ENCODE measurements at regions of chr5 and their contacts with region 1.

Region 1: GRCh38 chr5:10441083-10441991 is at the start of gene ROPN1L:
- DNase-seq: peak; percentile 96
- H3K4me3 Mint-ChIP-seq: peak within 1 kb of the TSS; percentile 88
- H3K27ac Mint-ChIP-seq: no peak within 1 kb of the TSS
- H3K4me1 Mint-ChIP-seq: peaks cover 31% of the 10 kb centered on the region
- H3K27me3 Mint-ChIP-seq: peaks cover 7% of the 10 kb centered on the region
- total RNA-seq, gene ROPN1L: not detected in 2 replicates

Region 2: GRCh38 chr5:10577371-10578292 is 136.3 kb after region 1 on chr5:
- intact Hi-C with region 1: loop called (anchors 5 kb)
- DNase-seq: no peak
- H3K4me3 Mint-ChIP-seq: peak overlapping the region; percentile 3
- H3K27ac Mint-ChIP-seq: peak overlapping the region; percentile 7
- H3K4me1 Mint-ChIP-seq: peaks cover 42% of the 10 kb centered on the region
- H3K27me3 Mint-ChIP-seq: no peaks in the 10 kb centered on the region